PC-9 (cell line): ENCODE measurements at regions of chr10 and their contacts with region 1.

Region 1: DNA sequence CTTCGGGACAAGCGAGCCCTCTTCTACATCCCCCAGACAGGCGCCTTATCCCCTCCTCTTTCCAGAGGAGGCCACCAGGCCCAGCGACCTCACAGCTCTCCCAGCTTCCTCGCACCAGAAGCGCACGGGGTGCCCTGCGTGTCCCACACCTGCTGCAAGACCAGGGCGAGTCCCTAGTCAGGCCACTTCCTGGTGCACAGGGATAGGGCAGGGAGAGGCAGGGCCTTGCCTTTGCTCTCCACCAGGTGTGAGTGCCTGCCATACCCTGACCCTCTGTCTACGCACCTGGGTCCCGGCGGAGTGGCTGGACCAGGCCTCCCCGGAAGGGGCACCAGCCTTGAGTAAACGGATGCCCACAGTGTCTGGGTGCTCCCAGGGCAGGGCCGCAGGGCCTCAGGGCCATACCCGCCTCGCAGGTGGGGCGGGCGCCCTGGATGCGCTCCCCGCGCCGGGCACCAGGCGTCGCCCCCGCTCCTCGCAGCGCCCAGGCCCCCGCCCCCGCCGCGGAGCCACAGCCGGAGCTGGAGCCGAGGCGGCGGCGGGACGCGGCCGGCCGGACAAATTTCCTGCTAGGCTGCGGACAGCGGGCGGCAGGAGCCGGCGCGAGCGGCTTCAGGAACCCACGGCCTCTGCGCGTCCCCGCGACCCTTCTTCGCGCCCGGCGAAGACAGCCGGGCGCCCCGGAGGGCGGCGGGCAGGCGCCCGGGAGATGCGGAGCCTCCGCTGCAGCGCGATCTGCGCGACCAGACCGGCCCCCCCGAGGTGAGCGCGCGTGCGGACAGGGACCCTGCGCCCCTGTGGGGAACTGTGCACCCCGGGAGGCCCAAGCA is at the start of gene PTPRE:
- DNase-seq: peak; percentile 75 to 83
- H3K4me3 ChIP-seq: peak within 1 kb of the TSS; percentile 67
- H3K27ac ChIP-seq: peak within 1 kb of the TSS; percentile 68
- H3K4me1 ChIP-seq: peaks cover 35% of the 10 kb centered on the region
- H3K27me3 ChIP-seq: no peaks in the 10 kb centered on the region
- CTCF ChIP-seq: peak; percentile 54
- total RNA-seq, gene PTPRE: 7.9 TPM in 2 replicates

Region 2: DNA sequence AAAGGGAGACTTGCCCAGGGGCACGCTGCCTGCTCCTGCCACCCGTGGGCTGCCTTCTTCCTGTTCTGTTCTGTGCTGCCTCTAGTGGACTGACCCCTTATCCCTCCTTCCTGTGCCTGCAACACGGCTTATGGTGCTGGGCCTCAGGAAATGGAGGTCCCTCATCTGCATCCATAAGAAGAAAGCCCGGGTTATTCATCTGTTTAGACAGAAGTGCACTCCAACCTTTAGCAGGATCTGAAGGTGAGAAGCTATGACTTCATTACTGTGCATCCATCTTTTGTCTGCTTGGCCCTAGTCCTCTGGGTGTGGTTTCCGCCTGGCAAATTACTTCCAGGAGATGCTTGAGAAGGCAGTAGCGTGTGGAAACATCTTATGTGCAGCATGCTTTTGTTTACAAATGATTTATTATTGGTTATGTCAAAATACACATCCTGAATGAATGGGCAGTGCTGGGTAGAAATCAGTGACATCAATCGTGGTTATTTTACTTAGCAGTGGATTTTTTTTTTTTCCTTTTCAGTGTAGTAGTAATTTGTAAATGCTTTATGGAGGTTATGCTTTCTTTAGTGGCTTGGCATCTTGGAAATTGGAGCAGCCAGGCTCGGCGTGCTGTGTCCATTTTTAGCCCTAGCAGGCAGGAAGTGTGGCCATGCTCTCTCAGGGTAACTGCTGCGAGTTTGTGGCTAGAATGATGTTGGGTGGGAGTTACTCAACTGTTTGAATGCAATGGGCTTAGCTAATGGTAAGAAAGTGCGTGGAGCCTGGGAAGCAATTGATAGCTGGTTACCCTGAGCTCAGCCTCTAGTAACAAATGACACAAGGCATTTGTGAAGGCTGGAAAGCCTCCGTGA is 12.9 kb after region 1 on chr10:
- CTCF ChIA-PET with region 1: interaction called, 4 read pairs
- POLR2A ChIA-PET with region 1: no interaction called
- intact Hi-C with region 1: loop called (anchors 2 kb)
- DNase-seq: peak in 1 of 2 experiments; percentile 65
- H3K4me3 ChIP-seq: no peak overlapping the region
- H3K27ac ChIP-seq: no peak overlapping the region
- H3K4me1 ChIP-seq: peaks cover 37% of the 10 kb centered on the region
- H3K27me3 ChIP-seq: no peaks in the 10 kb centered on the region
- CTCF ChIP-seq: no peak

Region 3: GRCh38 chr10:127945335-127945734 is 38.6 kb after region 1 on chr10:
- CTCF ChIA-PET with region 1: no interaction called
- POLR2A ChIA-PET with region 1: no interaction called
- intact Hi-C with region 1: loop called (anchors 1 kb)
- DNase-seq: peak; percentile 62 to 96
- H3K4me3 ChIP-seq: no peak overlapping the region
- H3K27ac ChIP-seq: peak overlapping the region; percentile 72
- H3K4me1 ChIP-seq: peaks cover 28% of the 10 kb centered on the region
- H3K27me3 ChIP-seq: no peaks in the 10 kb centered on the region
- CTCF ChIP-seq: no peak

Region 4: DNA sequence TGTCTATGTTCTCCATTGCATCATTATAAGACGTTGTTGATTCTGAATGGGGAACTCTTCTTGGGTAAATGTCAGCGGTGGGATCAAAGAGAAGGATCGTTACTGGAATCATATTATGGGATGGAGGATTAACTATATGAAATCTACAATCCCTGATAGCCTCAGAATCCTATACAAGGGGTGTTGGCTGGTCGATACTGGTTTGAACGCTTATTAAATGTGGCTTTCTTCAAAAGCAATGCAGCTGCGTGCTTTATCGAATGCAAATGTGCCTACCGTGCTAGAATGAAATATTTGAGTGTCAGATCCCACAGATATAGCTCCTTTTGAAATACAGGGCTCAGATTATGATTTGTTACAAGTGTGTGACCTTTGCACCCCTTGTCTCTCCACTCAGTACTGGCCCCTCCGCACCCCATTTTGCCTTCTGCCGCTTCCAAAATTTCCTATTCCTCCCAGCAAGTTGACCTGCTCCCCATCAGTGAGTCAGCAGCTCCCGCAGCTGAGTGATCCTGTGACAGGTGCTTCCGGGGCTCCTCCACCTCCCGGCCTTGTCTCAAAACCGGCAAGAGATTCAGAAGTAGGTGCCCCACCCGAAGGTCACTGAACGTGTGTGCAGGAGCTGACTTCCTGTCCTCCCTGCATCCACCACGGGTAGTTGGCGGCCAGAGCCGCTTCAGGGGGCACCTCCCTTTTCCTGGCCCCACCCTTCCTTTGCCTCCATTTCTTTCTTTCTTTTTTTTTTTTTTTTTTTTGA is 76.8 kb after region 1 on chr10:
- CTCF ChIA-PET with region 1: no interaction called
- POLR2A ChIA-PET with region 1: no interaction called
- intact Hi-C with region 1: loop called (anchors 2 kb)
- DNase-seq: peak; percentile 53 to 64
- H3K4me3 ChIP-seq: no peak overlapping the region
- H3K27ac ChIP-seq: peak overlapping the region; percentile 34; the same call in 1 of the 2 replicates
- H3K4me1 ChIP-seq: peaks cover 9% of the 10 kb centered on the region; the same call in 1 of the 2 replicates
- H3K27me3 ChIP-seq: no peaks in the 10 kb centered on the region
- CTCF ChIP-seq: no peak

Region 5: GRCh38 chr10:127990846-127991542 is 84.2 kb after region 1 on chr10:
- CTCF ChIA-PET with region 1: no interaction called
- POLR2A ChIA-PET with region 1: no interaction called
- intact Hi-C with region 1: loop called (anchors 1 kb)
- DNase-seq: peak; percentile 25 to 87
- H3K4me3 ChIP-seq: peak overlapping the region; percentile 30; the same call in 1 of the 2 replicates
- H3K27ac ChIP-seq: peak overlapping the region; percentile 90
- H3K4me1 ChIP-seq: peaks cover 44% of the 10 kb centered on the region
- H3K27me3 ChIP-seq: no peaks in the 10 kb centered on the region
- CTCF ChIP-seq: no peak

Region 6: GRCh38 chr10:128011175-128011979 is 104.6 kb after region 1 on chr10:
- CTCF ChIA-PET with region 1: interaction called, 5 read pairs
- POLR2A ChIA-PET with region 1: no interaction called
- intact Hi-C with region 1: loop called (anchors 1 kb)
- DNase-seq: peak in 1 of 2 experiments; percentile 80
- H3K4me3 ChIP-seq: no peak overlapping the region
- H3K27ac ChIP-seq: no peak overlapping the region
- H3K4me1 ChIP-seq: no peaks in the 10 kb centered on the region; the same call in 1 of the 2 replicates
- H3K27me3 ChIP-seq: no peaks in the 10 kb centered on the region
- CTCF ChIP-seq: peak; percentile 90

Region 7: DNA sequence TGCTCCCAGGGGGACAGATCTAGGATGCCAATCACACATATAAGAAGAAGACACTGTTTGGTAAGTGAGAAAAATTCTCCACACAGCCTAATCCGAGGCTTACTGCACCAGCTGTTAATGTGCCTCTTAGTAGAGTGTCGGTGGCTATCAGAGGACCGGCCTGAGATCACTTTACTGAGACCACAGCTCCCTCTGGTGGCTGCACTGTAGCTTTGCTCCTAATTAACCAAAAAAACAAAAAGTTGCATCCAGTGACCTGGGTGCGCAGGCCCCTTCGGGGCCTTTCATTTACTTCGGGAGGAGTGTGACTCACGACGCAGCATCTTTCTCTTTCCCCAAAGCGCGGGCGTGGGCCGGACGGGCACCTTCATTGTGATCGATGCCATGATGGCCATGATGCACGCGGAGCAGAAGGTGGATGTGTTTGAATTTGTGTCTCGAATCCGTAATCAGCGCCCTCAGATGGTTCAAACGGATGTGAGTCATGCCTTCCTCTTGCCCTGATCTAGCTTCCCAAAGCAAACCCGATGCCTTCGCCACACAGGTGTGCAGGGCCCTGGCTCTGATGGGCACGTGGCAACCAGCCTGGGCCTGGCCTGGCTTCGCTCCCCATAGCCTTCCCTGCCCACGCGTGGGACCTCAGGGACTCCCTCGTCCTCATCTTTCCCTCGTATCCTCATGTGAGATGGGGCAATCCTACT is 162.7 kb after region 1 on chr10:
- CTCF ChIA-PET with region 1: no interaction called
- POLR2A ChIA-PET with region 1: no interaction called
- intact Hi-C with region 1: loop called (anchors 1 kb)
- DNase-seq: peak; percentile 42 to 48
- H3K4me3 ChIP-seq: no peak overlapping the region
- H3K27ac ChIP-seq: no peak overlapping the region
- H3K4me1 ChIP-seq: peaks cover 12% of the 10 kb centered on the region
- H3K27me3 ChIP-seq: no peaks in the 10 kb centered on the region
- CTCF ChIP-seq: peak; percentile 80